Activated T-helper 2 cell treated with anti-CD3 and anti-CD28 coated beads, Interferon-gamma antibody, Interleukin-2, Interleukin-4, amounts not matched to agents 10 μg/mL and 5 μg/mL and 100 μg/mL, durations not matched to agents 14 hours and 24 hours and 36 hours (primary cell): ENCODE measurements at regions of chr5 and their contacts with region 1.

Region 1: GRCh38 chr5:159262859-159263567 is at the start of gene UBLCP1:
- DNase-seq: peak; percentile 76
- H3K4me3 Mint-ChIP-seq: peak within 1 kb of the TSS; percentile 96
- H3K27ac Mint-ChIP-seq: peak within 1 kb of the TSS; percentile 96
- H3K4me1 Mint-ChIP-seq: peaks cover 25% of the 10 kb centered on the region
- H3K27me3 Mint-ChIP-seq: peaks cover 6% of the 10 kb centered on the region
- total RNA-seq, gene UBLCP1: 25.2 and 26.7 TPM in 2 replicates

Region 2: DNA sequence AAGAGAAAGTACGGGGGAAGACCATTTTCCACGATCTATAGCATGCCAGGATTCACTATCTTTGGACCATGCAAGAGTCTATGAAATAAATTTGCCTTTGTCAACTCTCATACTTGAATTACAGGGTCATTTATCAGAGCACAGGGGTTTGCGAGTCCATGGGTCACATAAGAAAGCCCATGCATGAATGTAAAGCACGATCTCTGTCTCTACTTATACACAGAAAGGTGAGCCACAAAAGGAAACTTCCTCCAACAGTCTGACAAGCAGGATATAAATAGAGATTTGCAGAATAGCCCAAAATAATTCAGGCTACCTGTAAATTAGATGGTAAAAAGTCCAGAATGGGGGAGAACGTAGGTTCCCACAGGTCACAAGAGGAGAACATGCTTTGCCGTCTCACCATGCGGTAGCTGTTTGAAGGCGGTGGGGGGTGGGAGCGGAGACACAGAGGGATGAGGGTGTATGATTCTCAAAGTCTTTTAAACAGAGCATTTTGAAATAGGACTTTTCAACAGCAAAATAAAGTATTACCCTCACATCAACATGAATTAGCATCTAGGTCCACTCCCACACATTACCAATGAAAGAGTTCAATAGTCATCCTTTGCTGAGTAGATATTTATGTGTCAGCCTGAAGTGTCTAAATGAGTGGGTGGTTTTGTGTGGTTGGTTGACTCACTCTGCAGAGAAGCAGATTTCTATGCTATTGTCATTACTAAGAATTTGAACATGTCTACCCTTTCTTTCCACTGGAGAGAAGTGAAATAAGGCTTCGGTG is 443.0 kb before region 1 on chr5:
- intact Hi-C with region 1: loop called (anchors 5 kb)
- DNase-seq: no peak
- H3K4me3 Mint-ChIP-seq: no peak overlapping the region
- H3K27ac Mint-ChIP-seq: peak overlapping the region; percentile 18
- H3K4me1 Mint-ChIP-seq: peaks cover 39% of the 10 kb centered on the region
- H3K27me3 Mint-ChIP-seq: no peaks in the 10 kb centered on the region

Region 3: DNA sequence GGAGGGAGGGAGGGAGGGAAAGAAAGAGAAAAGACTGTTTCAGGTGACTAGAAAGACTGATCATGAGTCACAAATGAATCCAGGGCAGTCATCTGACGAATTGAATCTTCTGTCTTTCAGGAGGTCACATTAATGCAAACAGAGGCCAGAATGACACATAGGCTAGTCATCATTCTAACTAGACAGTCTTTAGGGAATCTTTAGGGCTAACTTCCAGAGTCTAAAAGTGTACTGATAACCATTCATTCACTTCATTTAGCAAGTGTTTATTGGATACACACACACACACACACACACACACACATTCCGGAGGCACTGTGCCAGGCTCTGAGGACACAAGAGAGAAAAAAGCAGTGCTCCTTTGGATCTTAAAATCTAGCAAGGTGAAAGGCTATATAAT is 320.0 kb before region 1 on chr5:
- intact Hi-C with region 1: no loop called
- DNase-seq: no peak
- H3K4me3 Mint-ChIP-seq: no peak overlapping the region
- H3K27ac Mint-ChIP-seq: no peak overlapping the region
- H3K4me1 Mint-ChIP-seq: no peaks in the 10 kb centered on the region
- H3K27me3 Mint-ChIP-seq: no peaks in the 10 kb centered on the region

Region 4: GRCh38 chr5:159049844-159050315 is 213.1 kb before region 1 on chr5:
- intact Hi-C with region 1: no loop called
- DNase-seq: no peak
- H3K4me3 Mint-ChIP-seq: no peak overlapping the region
- H3K27ac Mint-ChIP-seq: no peak overlapping the region
- H3K4me1 Mint-ChIP-seq: no peaks in the 10 kb centered on the region
- H3K27me3 Mint-ChIP-seq: peaks cover 75% of the 10 kb centered on the region

Region 5: GRCh38 chr5:159061179-159061796 is 201.7 kb before region 1 on chr5:
- intact Hi-C with region 1: no loop called
- DNase-seq: no peak
- H3K4me3 Mint-ChIP-seq: no peak overlapping the region
- H3K27ac Mint-ChIP-seq: no peak overlapping the region
- H3K4me1 Mint-ChIP-seq: peaks cover 3% of the 10 kb centered on the region
- H3K27me3 Mint-ChIP-seq: peaks cover 29% of the 10 kb centered on the region

Region 6: GRCh38 chr5:159156426-159157238 is 106.4 kb before region 1 on chr5:
- intact Hi-C with region 1: loop called (anchors 2 kb)
- DNase-seq: no peak
- H3K4me3 Mint-ChIP-seq: no peak overlapping the region
- H3K27ac Mint-ChIP-seq: no peak overlapping the region
- H3K4me1 Mint-ChIP-seq: peaks cover 29% of the 10 kb centered on the region
- H3K27me3 Mint-ChIP-seq: peaks cover 1% of the 10 kb centered on the region

Region 7: DNA sequence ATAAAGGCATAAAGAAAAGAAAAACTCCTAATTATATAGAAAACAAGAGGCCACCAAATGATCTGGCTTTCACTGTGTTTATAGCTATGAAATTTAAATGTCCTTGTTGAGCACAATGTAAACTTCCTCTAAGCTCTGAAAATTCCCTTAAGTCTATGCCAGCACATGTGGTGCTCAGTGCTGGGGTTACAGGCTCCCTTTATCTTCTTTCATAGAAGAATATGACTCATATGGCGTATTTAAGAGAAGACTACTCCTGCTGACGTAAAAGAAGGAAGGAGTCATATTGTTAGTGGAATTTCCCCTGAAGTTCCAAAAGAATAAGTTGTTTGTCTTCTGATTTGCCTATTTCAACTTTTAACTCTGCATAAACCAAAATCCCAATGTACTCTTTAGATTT is 84.0 kb before region 1 on chr5:
- intact Hi-C with region 1: loop called (anchors 5 kb)
- DNase-seq: no peak
- H3K4me3 Mint-ChIP-seq: peak overlapping the region; percentile 30
- H3K27ac Mint-ChIP-seq: peak overlapping the region; percentile 85
- H3K4me1 Mint-ChIP-seq: peaks cover 74% of the 10 kb centered on the region
- H3K27me3 Mint-ChIP-seq: no peaks in the 10 kb centered on the region

Region 8: GRCh38 chr5:159216454-159216853 is 46.6 kb before region 1 on chr5:
- intact Hi-C with region 1: loop called (anchors 2 kb)
- DNase-seq: no peak
- H3K4me3 Mint-ChIP-seq: no peak overlapping the region
- H3K27ac Mint-ChIP-seq: peak overlapping the region; percentile 57
- H3K4me1 Mint-ChIP-seq: peaks cover 24% of the 10 kb centered on the region
- H3K27me3 Mint-ChIP-seq: peaks cover 13% of the 10 kb centered on the region

Region 9: GRCh38 chr5:159240301-159240870 is 22.6 kb before region 1 on chr5:
- intact Hi-C with region 1: loop called (anchors 2 kb)
- DNase-seq: no peak
- H3K4me3 Mint-ChIP-seq: no peak overlapping the region
- H3K27ac Mint-ChIP-seq: peak overlapping the region; percentile 6
- H3K4me1 Mint-ChIP-seq: peaks cover 25% of the 10 kb centered on the region
- H3K27me3 Mint-ChIP-seq: no peaks in the 10 kb centered on the region

Region 10: DNA sequence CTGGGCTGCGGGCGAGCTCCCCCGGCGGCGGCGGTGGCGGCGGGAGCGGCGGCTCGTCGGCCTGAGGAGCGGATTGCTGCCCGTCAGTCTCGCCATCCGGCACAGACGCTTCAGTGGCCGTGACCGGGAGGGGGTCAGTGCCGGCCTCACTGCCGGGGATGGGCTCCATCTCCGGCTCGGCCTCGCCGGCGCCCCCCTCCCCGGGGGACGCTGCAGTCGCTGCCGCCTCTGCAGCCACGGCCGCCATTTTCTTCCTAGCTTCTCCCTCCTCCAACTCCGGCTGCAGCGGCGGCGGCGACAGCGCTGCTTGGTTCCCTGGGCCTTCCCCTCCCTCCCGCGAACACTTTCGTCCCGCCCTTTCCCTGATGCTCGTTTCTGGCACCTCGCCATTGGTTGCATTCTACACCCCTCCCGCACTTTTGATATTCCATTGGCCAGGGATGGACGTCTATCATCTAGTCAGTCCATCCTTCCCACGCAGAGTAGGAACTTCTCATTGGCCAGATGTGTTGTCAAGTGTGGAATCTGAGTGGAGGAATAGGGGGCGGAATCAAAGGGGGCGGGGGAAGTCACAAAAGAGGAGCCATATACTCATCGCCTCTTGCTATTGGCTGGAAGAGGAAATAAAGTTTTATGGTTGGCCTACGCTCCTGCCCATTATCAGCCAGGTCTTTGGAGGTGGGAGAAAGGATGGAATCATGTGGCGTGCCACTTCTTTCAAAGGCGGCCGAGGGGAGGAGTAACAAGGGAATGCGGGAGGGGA is 856.3 kb after region 1 on chr5 and contains the start of gene PWWP2A:
- intact Hi-C with region 1: loop called (anchors 1 kb)
- DNase-seq: peak; percentile 96
- H3K4me3 Mint-ChIP-seq: peak within 1 kb of the TSS; percentile 94
- H3K27ac Mint-ChIP-seq: peak within 1 kb of the TSS; percentile 94
- H3K4me1 Mint-ChIP-seq: peaks cover 13% of the 10 kb centered on the region
- H3K27me3 Mint-ChIP-seq: peaks cover 3% of the 10 kb centered on the region
- total RNA-seq, gene PWWP2A: 20.4 and 22.7 TPM in 2 replicates